Endothelial cell of umbilical vein (primary cell): ENCODE measurements at regions of chr17 and their contacts with region 1.

Region 1: DNA sequence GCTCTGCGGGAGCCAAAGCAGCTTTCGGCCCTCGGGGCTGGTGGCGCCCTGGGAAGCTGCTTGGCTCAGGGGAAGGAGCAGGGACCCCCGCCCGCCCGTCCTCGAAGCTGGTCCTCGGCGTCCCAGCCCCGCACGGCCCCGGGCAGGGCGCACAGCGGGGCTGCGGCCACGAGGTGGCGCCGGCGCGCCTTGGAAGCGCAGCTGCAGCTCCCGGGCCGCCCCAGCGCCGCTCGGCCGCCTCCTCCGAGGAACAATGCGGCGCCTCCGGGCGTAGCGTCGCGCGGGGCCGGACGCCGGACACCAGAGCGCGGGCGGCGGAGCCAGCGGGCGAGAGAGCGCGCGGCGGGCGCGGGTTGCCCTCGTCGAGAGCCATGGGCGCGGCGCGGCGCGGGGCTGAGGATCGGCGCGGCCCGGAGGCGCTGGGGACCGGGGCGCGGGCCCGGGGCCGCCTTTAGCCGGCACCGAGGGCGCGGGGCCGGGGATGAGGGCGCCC is at the start of gene MGAT5B:
- DNase-seq: peak; percentile 66
- H3K4me3 ChIP-seq: no peak within 1 kb of the TSS
- H3K27ac ChIP-seq: peak within 1 kb of the TSS; percentile 10
- H3K4me1 ChIP-seq: peaks cover 32% of the 10 kb centered on the region
- H3K27me3 ChIP-seq: peaks cover 0 to 12% of the 10 kb centered on the region in 2 experiments
- CTCF ChIP-seq: peak; percentile 72 to 92
- POLR2A ChIP-seq: no peak
- total RNA-seq, gene MGAT5B: 2.1 and 2.3 TPM in 2 replicates

Region 2: DNA sequence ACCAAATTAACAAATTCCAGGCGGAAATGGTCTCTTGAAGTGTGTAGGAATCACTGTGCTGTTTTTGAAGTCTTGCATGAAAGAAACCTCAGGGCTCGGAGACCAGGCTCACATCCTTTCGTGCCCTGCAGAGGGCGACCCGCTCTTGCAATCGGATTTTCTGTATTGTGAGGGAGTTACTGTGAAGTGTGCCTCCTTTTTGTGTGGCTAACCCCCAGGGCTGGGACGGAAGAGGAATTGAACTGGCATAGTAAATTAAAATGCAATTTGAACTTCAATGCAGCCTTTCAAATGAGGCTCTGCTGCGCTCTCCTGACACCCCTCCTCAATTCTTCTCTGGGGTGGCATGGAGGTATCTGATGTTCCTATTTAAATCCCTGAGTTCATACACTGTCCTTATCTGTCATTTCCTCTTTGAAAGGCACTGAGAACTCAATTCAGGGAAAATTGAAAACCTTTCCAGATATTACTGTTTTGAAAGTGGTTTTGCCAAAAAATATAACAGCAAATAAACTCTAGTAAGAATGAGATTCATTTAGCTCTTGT is 51.6 kb before region 1 on chr17:
- CTCF ChIA-PET with region 1: interaction called, 12 read pairs
- POLR2A ChIA-PET with region 1: no interaction called
- dilution Hi-C with region 1: no loop called
- intact Hi-C with region 1: no loop called
- DNase-seq: peak; percentile 41
- H3K4me3 ChIP-seq: no peak overlapping the region
- H3K27ac ChIP-seq: no peak overlapping the region
- H3K4me1 ChIP-seq: no peaks in the 10 kb centered on the region
- H3K27me3 ChIP-seq: peaks cover 0 to 3% of the 10 kb centered on the region in 2 experiments
- CTCF ChIP-seq: peak; percentile 57 to 73
- POLR2A ChIP-seq: no peak

Region 3: DNA sequence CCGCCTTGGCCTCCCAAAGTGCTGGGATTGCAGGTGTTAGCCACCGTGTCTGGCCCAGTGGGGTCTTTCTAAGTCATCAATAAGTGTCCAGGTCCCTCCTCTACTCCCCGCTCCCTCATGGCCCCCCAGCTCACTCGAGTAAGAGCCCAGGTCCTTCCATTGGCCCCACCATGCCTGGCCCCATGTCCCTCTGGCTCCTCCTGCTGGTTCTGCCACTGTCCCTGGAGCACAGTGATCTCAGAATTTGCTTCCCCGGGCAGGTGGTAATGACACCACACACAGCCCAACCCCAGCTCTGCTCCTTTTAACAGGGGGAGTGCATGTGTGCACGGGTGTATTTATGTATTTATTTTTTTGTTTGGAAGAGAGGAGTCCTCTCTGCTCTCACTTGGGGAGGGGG is 19.6 kb after region 1 on chr17:
- CTCF ChIA-PET with region 1: interaction called, 25 read pairs
- POLR2A ChIA-PET with region 1: no interaction called
- dilution Hi-C with region 1: no loop called
- intact Hi-C with region 1: no loop called
- DNase-seq: no peak
- H3K4me3 ChIP-seq: no peak overlapping the region
- H3K27ac ChIP-seq: no peak overlapping the region
- H3K4me1 ChIP-seq: no peaks in the 10 kb centered on the region
- H3K27me3 ChIP-seq: no peaks in the 10 kb centered on the region
- CTCF ChIP-seq: peak in 1 of 2 donors; percentile 5
- POLR2A ChIP-seq: no peak

Region 4: DNA sequence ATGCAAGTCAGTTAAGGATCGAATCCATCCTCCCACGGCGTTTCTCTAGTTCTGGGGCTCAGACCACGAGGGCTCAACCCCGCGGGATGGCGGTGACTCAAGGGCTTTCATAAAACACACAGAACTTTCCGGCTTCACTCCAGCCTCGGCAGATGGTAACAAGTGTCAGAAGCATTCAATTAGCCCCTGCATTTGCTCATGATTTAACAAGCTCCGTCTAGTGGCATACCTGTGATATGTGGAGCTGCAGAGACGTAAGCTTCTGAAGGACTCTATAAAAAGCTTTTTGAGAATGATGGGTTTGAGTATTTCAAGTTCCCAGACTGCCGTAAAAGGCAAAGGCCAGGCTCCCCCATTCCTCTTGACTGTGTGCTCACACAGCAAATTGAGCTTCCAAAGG is 181.2 kb after region 1 on chr17:
- CTCF ChIA-PET with region 1: interaction called, 334 read pairs
- POLR2A ChIA-PET with region 1: interaction called, 3 read pairs
- dilution Hi-C with region 1: no loop called
- intact Hi-C with region 1: no loop called
- DNase-seq: no peak
- H3K4me3 ChIP-seq: no peak overlapping the region
- H3K27ac ChIP-seq: no peak overlapping the region
- H3K4me1 ChIP-seq: no peaks in the 10 kb centered on the region
- H3K27me3 ChIP-seq: peaks cover 0 to 6% of the 10 kb centered on the region in 2 experiments
- CTCF ChIP-seq: no peak
- POLR2A ChIP-seq: no peak

Region 5: GRCh38 chr17:77068915-77069314 is 200.7 kb after region 1 on chr17:
- CTCF ChIA-PET with region 1: interaction called, 60 read pairs
- POLR2A ChIA-PET with region 1: no interaction called
- dilution Hi-C with region 1: no loop called
- intact Hi-C with region 1: loop called (anchors 1 kb)
- DNase-seq: no peak
- H3K4me3 ChIP-seq: no peak overlapping the region
- H3K27ac ChIP-seq: no peak overlapping the region
- H3K4me1 ChIP-seq: no peaks in the 10 kb centered on the region
- H3K27me3 ChIP-seq: peaks cover 9% of the 10 kb centered on the region in 2 experiments
- CTCF ChIP-seq: no peak
- POLR2A ChIP-seq: no peak